HepG2 (cell line): ENCODE measurements at regions of chr5 and their contacts with region 1.

Region 1: GRCh38 chr5:53035868-53036381 is 46.8 kb downstream of the ITGA2 start:
- DNase-seq: no peak
- ATAC-seq: peak; percentile 53
- H3K4me3 ChIP-seq: no peak overlapping the region
- H3K27ac ChIP-seq: no peak overlapping the region
- H3K4me1 ChIP-seq: peaks cover 42% of the 10 kb centered on the region
- H3K27me3 ChIP-seq: no peaks in the 10 kb centered on the region
- CTCF ChIP-seq: peak; percentile 34
- EP300 ChIP-seq: no peak
- POLR2A ChIP-seq: no peak
- RAD21 ChIP-seq: no peak

Region 2: GRCh38 chr5:52948418-52949076 is 87.4 kb before region 1 on chr5:
- CTCF ChIA-PET with region 1: interaction called, 15 read pairs
- POLR2A ChIA-PET with region 1: no interaction called
- in situ Hi-C with region 1: loop called (anchors 10 kb)
- intact Hi-C with region 1: loop called (anchors 1 kb)
- DNase-seq: peak; percentile 82
- ATAC-seq: peak; percentile 99
- H3K4me3 ChIP-seq: no peak overlapping the region
- H3K27ac ChIP-seq: no peak overlapping the region
- H3K4me1 ChIP-seq: peaks cover 9% of the 10 kb centered on the region
- H3K27me3 ChIP-seq: no peaks in the 10 kb centered on the region
- CTCF ChIP-seq: peak; percentile 87
- EP300 ChIP-seq: no peak
- POLR2A ChIP-seq: no peak
- RAD21 ChIP-seq: peak; percentile 91

Region 3: DNA sequence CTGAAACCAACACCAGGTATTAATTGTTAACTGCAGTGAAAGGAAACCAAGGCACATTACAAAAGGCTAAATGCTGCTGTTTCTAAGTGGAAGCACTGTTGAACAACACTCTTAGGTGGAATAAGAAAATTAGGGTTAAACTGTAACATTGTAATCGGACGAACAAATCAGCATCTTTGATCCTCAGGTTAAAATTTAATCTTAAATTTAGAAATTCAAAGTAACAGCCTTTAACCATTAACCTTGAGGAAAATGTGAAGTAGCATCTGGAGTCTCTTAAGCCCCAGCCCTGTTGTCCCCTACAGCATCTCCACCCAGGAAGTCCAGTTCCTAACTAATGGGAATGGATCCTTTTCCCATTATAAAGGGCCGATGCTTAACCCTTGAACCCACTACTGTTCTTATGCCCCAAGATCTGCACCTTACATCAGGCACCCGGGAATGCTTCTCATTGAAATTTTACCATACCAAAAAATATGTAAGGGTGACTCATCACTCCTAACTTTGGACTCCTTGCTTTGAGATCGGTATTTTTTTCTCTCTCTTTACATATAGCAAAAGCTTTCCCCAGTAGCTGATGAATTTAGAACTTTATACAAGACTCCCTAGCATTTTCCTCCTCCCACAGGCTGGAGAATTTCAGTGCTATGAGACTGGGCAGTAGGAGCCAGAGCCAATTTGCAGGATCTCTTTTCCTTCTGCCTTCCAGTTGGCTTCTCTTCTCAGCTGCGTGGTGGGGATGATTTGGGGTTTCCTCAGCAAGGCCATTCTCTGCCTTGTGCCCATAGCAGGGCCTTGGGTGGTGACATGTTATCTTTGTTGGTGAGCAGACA is 78.8 kb before region 1 on chr5:
- CTCF ChIA-PET with region 1: no interaction called
- POLR2A ChIA-PET with region 1: interaction called, 3 read pairs
- in situ Hi-C with region 1: loop called (anchors 10 kb)
- intact Hi-C with region 1: no loop called
- DNase-seq: peak; percentile 75
- ATAC-seq: peak; percentile 86
- H3K4me3 ChIP-seq: peak overlapping the region in 2 of 3 experiments; percentile 27 to 34; a peak in 3 of 6 replicates
- H3K27ac ChIP-seq: peak overlapping the region; percentile 66
- H3K4me1 ChIP-seq: peaks cover 48% of the 10 kb centered on the region
- H3K27me3 ChIP-seq: no peaks in the 10 kb centered on the region
- CTCF ChIP-seq: no peak
- EP300 ChIP-seq: peak in 1 of 2 experiments; percentile 36; a peak in 1 of 4 replicates
- POLR2A ChIP-seq: 0 out of 4 replicates have a peak, but pooled peaks have one; percentile 10 to 27
- RAD21 ChIP-seq: no peak

Region 4: GRCh38 chr5:52989781-52990527 is 46.0 kb before region 1 on chr5:
- CTCF ChIA-PET with region 1: no interaction called
- POLR2A ChIA-PET with region 1: interaction called, 8 read pairs
- in situ Hi-C with region 1: no loop called
- intact Hi-C with region 1: loop called (anchors 1 kb)
- DNase-seq: no peak
- ATAC-seq: peak; percentile 70
- H3K4me3 ChIP-seq: peak overlapping the region; percentile 87 to 91 (median 90)
- H3K27ac ChIP-seq: peak overlapping the region; percentile 70
- H3K4me1 ChIP-seq: peaks cover 64% of the 10 kb centered on the region
- H3K27me3 ChIP-seq: no peaks in the 10 kb centered on the region; a peak in 1 of 5 replicates
- CTCF ChIP-seq: peak; percentile 37
- EP300 ChIP-seq: no peak
- POLR2A ChIP-seq: no peak; a peak in 1 of 4 replicates
- RAD21 ChIP-seq: no peak; the same call in 1 of the 2 replicates

Region 5: GRCh38 chr5:52997424-52997823 is 38.5 kb before region 1 on chr5:
- CTCF ChIA-PET with region 1: no interaction called
- POLR2A ChIA-PET with region 1: interaction called, 4 read pairs
- in situ Hi-C with region 1: no loop called
- intact Hi-C with region 1: loop called (anchors 2 kb)
- DNase-seq: peak; percentile 98
- ATAC-seq: peak; percentile 96
- H3K4me3 ChIP-seq: peak overlapping the region in 2 of 3 experiments; percentile 30 to 47; a peak in 3 of 6 replicates
- H3K27ac ChIP-seq: peak overlapping the region; percentile 82
- H3K4me1 ChIP-seq: peaks cover 99% of the 10 kb centered on the region
- H3K27me3 ChIP-seq: no peaks in the 10 kb centered on the region
- CTCF ChIP-seq: no peak
- EP300 ChIP-seq: peak; percentile 72 to 75; a peak in 2 of 4 replicates
- POLR2A ChIP-seq: peak in 1 of 2 experiments; percentile 41; a peak in 2 of 4 replicates
- RAD21 ChIP-seq: no peak

Region 6: GRCh38 chr5:53008751-53009150 is 27.2 kb before region 1 on chr5:
- CTCF ChIA-PET with region 1: no interaction called
- POLR2A ChIA-PET with region 1: interaction called, 4 read pairs
- in situ Hi-C with region 1: no loop called
- intact Hi-C with region 1: loop called (anchors 2 kb)
- DNase-seq: no peak
- ATAC-seq: peak; percentile 16; the same call in 1 of the 3 replicates
- H3K4me3 ChIP-seq: no peak overlapping the region
- H3K27ac ChIP-seq: peak overlapping the region; percentile 10
- H3K4me1 ChIP-seq: peaks cover 95% of the 10 kb centered on the region
- H3K27me3 ChIP-seq: no peaks in the 10 kb centered on the region
- CTCF ChIP-seq: no peak
- EP300 ChIP-seq: 0 out of 4 replicates have a peak, but pooled peaks of 1 of the 2 experiments have one; percentile 7
- POLR2A ChIP-seq: no peak
- RAD21 ChIP-seq: no peak

Region 7: DNA sequence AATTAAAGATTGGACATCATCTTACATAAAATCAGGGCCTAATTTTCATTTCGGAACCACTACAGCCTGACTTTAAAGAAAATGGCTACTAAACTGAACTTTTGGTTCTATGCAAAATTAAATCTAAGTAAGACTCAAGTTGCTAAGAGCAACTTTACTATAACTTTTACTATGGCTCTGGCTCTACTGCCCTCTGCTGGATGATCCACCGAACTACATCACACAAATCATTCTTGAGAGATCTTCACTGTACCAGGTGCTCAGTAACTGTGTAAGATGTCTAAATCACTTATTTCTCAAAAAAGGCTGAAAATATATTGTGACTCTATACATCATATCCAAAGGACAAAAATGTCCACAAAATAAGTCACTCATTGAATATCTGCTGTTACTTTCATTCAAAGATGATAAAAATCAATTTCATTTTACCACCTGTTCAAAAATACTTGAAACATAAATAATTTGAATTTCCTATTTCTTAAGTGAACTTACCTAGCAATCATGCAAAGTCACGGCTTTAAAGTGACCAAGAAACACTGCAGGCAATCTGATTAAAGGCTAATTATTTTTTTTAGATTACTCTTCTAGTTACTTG is 60.1 kb after region 1 on chr5:
- CTCF ChIA-PET with region 1: no interaction called
- POLR2A ChIA-PET with region 1: no interaction called
- in situ Hi-C with region 1: no loop called
- intact Hi-C with region 1: loop called (anchors 10 kb)
- DNase-seq: peak; percentile 56
- ATAC-seq: peak; percentile 31
- H3K4me3 ChIP-seq: no peak overlapping the region
- H3K27ac ChIP-seq: no peak overlapping the region
- H3K4me1 ChIP-seq: peaks cover 27% of the 10 kb centered on the region
- H3K27me3 ChIP-seq: no peaks in the 10 kb centered on the region
- CTCF ChIP-seq: peak; percentile 78
- EP300 ChIP-seq: no peak
- POLR2A ChIP-seq: no peak
- RAD21 ChIP-seq: 0 out of 2 replicates have a peak, but pooled peaks have one; percentile 13